IMR-90 (cell line): ENCODE measurements at regions of chr12 and their contacts with region 1.

Region 1: DNA sequence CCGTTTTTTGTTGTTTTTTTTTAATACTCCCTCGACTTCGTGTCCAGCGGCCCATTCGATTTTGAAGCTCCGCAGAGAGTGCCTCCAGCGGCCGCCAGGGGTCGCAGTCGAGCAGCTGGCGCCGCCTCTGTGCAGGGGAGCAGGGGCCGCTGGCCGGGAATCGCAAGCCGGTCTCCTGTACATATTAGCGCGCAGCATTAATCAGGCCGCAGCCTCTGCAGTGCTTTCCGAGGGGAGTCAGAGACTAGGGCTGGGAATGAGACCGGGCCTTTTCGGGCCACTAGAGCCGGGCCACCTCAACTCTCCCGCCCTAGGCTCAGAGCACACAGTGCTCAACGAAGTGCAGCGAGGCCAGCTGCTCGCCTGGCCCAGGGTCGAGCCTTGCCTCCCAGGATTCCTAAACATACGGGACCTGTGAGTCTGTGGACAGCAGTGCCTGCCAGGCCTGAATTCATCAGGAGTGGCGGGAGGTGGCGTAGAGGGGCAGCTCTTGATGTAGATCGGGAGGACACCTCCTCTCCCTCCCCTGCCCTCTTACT is 81.8 kb downstream of the EMP1 start:
- DNase-seq: peak; percentile 58
- ATAC-seq: peak; percentile 99
- H3K4me3 ChIP-seq: no peak overlapping the region
- H3K27ac ChIP-seq: no peak overlapping the region
- H3K4me1 ChIP-seq: no peaks in the 10 kb centered on the region
- H3K27me3 ChIP-seq: peaks cover 58% of the 10 kb centered on the region
- CTCF ChIP-seq: peak; percentile 92
- POLR2A ChIP-seq: no peak
- RAD21 ChIP-seq: peak; percentile 74

Region 2: DNA sequence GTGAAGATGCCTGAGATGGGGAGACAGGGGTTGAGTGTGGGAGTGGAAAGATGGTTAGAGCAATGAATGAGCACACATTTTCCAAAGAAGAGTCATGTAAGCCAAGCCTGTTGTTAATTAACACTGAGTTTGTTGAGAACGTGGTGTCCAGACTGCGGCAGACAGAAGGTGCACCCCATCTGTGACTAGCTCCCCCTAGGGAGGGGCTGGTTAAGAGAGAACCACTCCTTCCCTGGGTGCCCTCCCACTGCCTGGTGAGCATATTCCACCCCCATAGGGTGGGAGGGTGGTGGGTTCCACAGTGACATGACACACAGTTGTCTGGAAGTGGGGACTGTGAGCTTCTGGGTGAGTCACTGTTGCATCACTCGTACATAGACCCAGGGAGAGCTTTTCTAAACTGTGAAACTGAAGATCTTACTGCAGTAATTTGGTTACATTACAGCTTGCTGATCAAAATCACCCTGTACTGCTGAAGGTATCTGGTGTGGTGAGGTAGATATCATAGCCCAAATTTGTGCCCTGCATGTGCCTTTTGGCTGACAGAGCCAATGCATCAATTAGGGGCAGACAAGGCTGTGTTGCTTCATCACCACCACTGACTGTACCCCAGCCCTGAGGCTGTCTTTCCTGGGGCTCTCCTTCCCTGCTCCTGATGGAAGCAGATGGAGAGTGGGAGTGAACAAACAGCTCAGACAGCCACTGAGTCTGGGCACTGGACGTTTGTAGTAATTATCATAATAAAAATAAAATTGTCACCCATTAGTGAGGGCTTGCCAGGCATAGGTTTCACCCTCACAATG is 69.1 kb after region 1 on chr12:
- CTCF ChIA-PET with region 1: no interaction called
- POLR2A ChIA-PET with region 1: no interaction called
- dilution Hi-C with region 1: no loop called
- in situ Hi-C with region 1: no loop called
- intact Hi-C with region 1: no loop called
- DNase-seq: peak; percentile 56
- ATAC-seq: peak; percentile 65
- H3K4me3 ChIP-seq: no peak overlapping the region
- H3K27ac ChIP-seq: no peak overlapping the region
- H3K4me1 ChIP-seq: 0 out of 2 replicates have a peak, but pooled peaks cover 3% of the 10 kb centered on the region
- H3K27me3 ChIP-seq: no peaks in the 10 kb centered on the region
- CTCF ChIP-seq: no peak
- POLR2A ChIP-seq: no peak
- RAD21 ChIP-seq: no peak

Region 3: GRCh38 chr12:13661005-13661887 is 382.9 kb after region 1 on chr12:
- CTCF ChIA-PET with region 1: interaction called, 5 read pairs
- POLR2A ChIA-PET with region 1: no interaction called
- dilution Hi-C with region 1: no loop called
- in situ Hi-C with region 1: no loop called
- intact Hi-C with region 1: loop called (anchors 1 kb)
- DNase-seq: peak; percentile 47
- ATAC-seq: peak; percentile 93
- H3K4me3 ChIP-seq: no peak overlapping the region
- H3K27ac ChIP-seq: no peak overlapping the region
- H3K4me1 ChIP-seq: no peaks in the 10 kb centered on the region
- H3K27me3 ChIP-seq: no peaks in the 10 kb centered on the region
- CTCF ChIP-seq: peak; percentile 65
- POLR2A ChIP-seq: no peak
- RAD21 ChIP-seq: peak; percentile 59